Aorta (tissue), 5 donors: ENCODE measurements at regions of chr14 and their contacts with region 1.

Region 1: GRCh38 chr14:68970038-68970612 is 9.0 kb downstream of the ACTN1 start:
- DNase-seq: peak in 1 of 2 donors; percentile 38
- ATAC-seq: no peak
- H3K4me3 ChIP-seq: no peak overlapping the region
- H3K27ac ChIP-seq: peak overlapping the region in 1 of 2 donors; percentile 68
- H3K4me1 ChIP-seq: peaks cover 6% of the 10 kb centered on the region in 2 donors
- H3K27me3 ChIP-seq: no peaks in the 10 kb centered on the region

Region 2: GRCh38 chr14:68905107-68905895 is 64.8 kb before region 1 on chr14:
- intact Hi-C with region 1: loop called (anchors 5 kb)
- DNase-seq: peak in 1 of 2 donors; percentile 21
- ATAC-seq: no peak
- H3K4me3 ChIP-seq: no peak overlapping the region
- H3K27ac ChIP-seq: peak overlapping the region in 1 of 2 donors; percentile 30
- H3K4me1 ChIP-seq: no peaks in the 10 kb centered on the region
- H3K27me3 ChIP-seq: no peaks in the 10 kb centered on the region

Region 3: DNA sequence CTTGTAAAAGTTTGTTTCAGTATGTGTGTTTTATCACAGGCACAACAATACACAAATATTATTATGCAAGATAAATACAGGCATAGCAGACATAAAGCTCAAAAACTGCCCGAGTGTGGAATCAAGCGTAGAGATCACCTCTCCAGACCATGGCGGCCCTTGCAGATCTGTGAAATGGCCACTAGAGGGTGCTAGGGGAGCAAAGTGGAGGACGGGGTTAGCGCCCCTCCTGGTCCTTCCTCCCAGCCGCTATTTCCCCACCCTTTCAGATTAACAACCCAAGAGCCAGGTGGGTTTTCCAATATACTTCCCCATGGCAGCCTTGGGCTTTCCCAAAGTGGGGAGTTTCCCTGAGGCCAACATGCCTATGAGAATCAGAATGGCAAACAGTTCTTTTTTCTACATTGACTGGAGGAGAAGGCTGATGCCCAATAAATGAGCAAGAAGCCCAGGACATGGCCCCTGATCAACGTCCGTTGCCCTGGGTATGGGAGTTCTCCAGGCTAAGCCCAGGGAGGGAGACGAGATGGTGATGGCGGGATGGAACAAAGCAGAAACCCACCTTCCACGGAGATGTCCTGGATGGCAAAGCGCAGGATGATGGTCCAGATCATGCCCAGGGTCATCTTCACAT is 58.4 kb before region 1 on chr14:
- intact Hi-C with region 1: loop called (anchors 5 kb)
- DNase-seq: peak; percentile 69 to 87
- ATAC-seq: peak; percentile 90
- H3K4me3 ChIP-seq: no peak overlapping the region
- H3K27ac ChIP-seq: peak overlapping the region in 1 of 2 donors; percentile 74
- H3K4me1 ChIP-seq: peaks cover 0 to 3% of the 10 kb centered on the region in 2 donors
- H3K27me3 ChIP-seq: no peaks in the 10 kb centered on the region

Region 4: GRCh38 chr14:68926236-68926635 is 43.9 kb before region 1 on chr14:
- intact Hi-C with region 1: loop called in 1 of 2 experiments (anchors 5 kb)
- DNase-seq: no peak
- ATAC-seq: no peak
- H3K4me3 ChIP-seq: no peak overlapping the region
- H3K27ac ChIP-seq: peak overlapping the region in 1 of 2 donors; percentile 65
- H3K4me1 ChIP-seq: peaks cover 3 to 7% of the 10 kb centered on the region in 2 donors
- H3K27me3 ChIP-seq: no peaks in the 10 kb centered on the region